ENCODE measurements at regions of chr6 and their contacts with region 1.

Region 1: DNA sequence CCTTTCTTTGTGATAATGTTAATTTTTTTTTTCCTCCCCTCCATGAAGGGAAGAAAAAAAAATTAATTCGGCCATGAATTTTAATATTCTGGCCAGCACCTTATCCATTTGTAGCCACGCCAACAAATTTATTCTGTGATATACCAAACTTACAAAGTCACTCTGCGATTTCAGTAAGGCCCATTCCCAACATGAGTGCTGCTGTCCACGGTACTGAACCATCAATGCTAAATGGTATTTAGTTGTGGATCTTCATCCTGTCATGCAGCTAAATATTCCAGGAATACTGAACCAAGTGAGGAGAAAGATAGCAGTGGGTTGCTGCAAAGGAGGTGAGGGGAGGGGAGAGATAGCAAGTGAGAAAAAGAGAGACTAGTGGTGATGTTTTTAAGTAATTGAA is 19.5 kb upstream of the RSPH4A start:
- DNase-seq: no peak
- ATAC-seq: no peak
- H3K4me3 ChIP-seq: no peak overlapping the region
- H3K4me3 Mint-ChIP-seq: no peak overlapping the region
- H3K27ac ChIP-seq: no peak overlapping the region
- H3K27ac Mint-ChIP-seq: no peak overlapping the region
- H3K4me1 ChIP-seq: no peaks in the 10 kb centered on the region
- H3K4me1 Mint-ChIP-seq: peaks cover 0 to 2% (median 0%) of the 10 kb centered on the region in 7 donors
- H3K27me3 ChIP-seq: no peaks in the 10 kb centered on the region
- H3K27me3 Mint-ChIP-seq: no peaks in the 10 kb centered on the region

Region 2: GRCh38 chr6:115467726-115468125 is 1129.1 kb before region 1 on chr6:
- CTCF ChIA-PET with region 1: no interaction called
- POLR2A ChIA-PET with region 1: no interaction called
- intact Hi-C with region 1: no loop called
- DNase-seq: no peak
- ATAC-seq: no peak
- H3K4me3 ChIP-seq: no peak overlapping the region
- H3K4me3 Mint-ChIP-seq: no peak overlapping the region
- H3K27ac ChIP-seq: no peak overlapping the region
- H3K27ac Mint-ChIP-seq: no peak overlapping the region
- H3K4me1 ChIP-seq: no peaks in the 10 kb centered on the region
- H3K4me1 Mint-ChIP-seq: no peaks in the 10 kb centered on the region
- H3K27me3 ChIP-seq: no peaks in the 10 kb centered on the region
- H3K27me3 Mint-ChIP-seq: no peaks in the 10 kb centered on the region

Region 3: DNA sequence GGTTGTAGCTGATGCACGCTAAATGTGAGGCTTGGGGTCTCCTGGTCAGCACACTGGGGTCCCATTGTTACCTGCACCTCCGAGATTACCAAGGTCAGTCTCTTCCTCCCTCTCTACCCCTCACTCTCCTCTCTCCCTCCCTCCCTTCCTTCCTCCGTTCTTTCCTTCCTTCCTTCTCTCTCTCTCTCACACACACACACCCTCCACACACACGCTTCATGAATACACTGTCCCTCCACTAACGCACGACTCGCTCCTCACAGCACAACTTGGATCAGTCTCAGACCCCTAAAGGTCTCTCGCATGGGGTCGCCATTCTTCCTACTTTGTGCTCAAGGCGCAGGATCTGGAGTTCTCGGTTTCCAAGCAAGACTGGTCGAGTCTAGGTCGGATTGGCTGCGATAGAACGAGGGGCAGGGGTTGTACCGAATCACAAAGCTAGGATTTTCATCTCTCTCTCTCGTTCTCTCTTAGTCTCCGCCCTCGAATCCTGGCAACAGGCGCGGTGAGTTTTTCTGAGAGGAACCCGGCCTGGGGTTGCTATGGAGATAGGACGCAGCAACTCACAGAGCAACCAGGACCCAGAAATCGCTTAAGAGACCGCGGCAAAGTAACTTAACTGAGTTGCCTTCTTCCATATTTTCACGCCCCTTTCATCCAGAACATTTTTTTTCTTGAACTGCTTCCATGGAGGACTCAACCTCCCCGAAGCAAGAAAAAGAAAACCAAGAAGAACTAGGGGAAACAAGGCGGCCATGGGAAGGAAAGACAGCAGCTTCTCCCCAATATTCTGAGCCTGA is 19.3 kb after region 1 on chr6 and contains the start of gene RSPH4A:
- CTCF ChIA-PET with region 1: no interaction called
- POLR2A ChIA-PET with region 1: no interaction called
- intact Hi-C with region 1: loop called in 1 of 2 experiments (anchors 2 kb)
- DNase-seq: peak; percentile 17 to 76 (median 61)
- ATAC-seq: peak; percentile 95
- H3K4me3 ChIP-seq: peak within 1 kb of the TSS; percentile 78
- H3K4me3 Mint-ChIP-seq: peak within 1 kb of the TSS; percentile 81 to 94 (median 86)
- H3K27ac ChIP-seq: peak within 1 kb of the TSS; percentile 28
- H3K27ac Mint-ChIP-seq: peak within 1 kb of the TSS in 8 of 9 donors; percentile 4 to 78 (median 38)
- H3K4me1 ChIP-seq: peaks cover 5 to 6% of the 10 kb centered on the region in 2 donors
- H3K4me1 Mint-ChIP-seq: peaks cover 6 to 22% (median 16%) of the 10 kb centered on the region in 7 donors
- H3K27me3 ChIP-seq: no peaks in the 10 kb centered on the region
- H3K27me3 Mint-ChIP-seq: peaks cover 0 to 54% (median 14%) of the 10 kb centered on the region in 5 donors
- total RNA-seq, gene RSPH4A: 0.53 to 1.3 (median 0.73) TPM

Measured in naive thymus-derived CD4-positive, alpha-beta T cell (primary cell).